ENCODE measurements at regions of chr3 and their contacts with region 1.

Region 1: DNA sequence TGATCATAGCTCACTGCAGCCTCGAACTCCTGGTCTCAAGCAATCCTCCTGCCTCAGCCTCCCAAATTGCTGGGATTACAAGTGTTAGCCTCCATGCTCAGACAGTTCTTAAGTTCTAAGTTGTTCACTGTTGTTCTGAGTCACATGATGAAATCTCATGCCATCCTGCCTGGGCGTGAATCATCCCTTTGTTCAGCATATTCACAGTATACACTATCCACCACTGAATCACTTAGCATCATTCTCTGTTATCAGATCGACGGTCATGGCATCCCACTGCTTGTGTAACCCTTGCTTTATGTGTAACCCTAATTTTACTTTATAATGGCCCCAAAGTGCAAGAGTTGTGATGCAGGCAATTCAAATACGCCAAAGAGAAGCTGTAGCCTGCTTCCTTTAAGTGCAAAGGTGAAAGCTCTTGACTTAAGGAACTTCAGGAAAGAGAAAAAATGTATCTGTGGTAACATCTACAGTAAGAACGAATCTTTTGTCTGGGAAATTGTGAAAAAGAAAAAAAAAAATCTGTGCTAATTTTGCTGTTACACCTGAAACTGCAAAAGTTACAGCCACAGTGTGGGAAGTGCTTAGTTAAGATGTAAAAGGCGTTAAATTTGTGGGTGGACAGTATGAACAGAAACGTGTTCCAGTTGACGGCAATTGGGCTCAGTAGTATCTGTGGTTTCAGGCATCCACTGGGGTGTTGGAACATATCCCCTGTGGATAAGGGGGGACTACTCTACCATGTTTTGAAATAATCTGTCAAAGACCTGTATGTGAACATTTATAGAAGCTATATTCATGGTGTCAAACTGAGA is 80.6 kb downstream of the PCOLCE2 start:
- DNase-seq: peak; percentile 72
- ATAC-seq: peak; percentile 62
- H3K4me3 ChIP-seq: no peak overlapping the region
- H3K27ac ChIP-seq: no peak overlapping the region
- H3K4me1 ChIP-seq: no peaks in the 10 kb centered on the region
- H3K27me3 ChIP-seq: no peaks in the 10 kb centered on the region
- CTCF ChIP-seq: no peak
- POLR2A ChIP-seq: no peak
- RAD21 ChIP-seq: no peak

Region 2: GRCh38 chr3:142595951-142596725 is 212.2 kb before region 1 on chr3 and contains the start of gene PLS1:
- CTCF ChIA-PET with region 1: no interaction called
- POLR2A ChIA-PET with region 1: no interaction called
- dilution Hi-C with region 1: no loop called
- in situ Hi-C with region 1: no loop called
- intact Hi-C with region 1: loop called (anchors 10 kb)
- DNase-seq: peak; percentile 70
- ATAC-seq: peak; percentile 96
- H3K4me3 ChIP-seq: peak within 1 kb of the TSS; percentile 81
- H3K27ac ChIP-seq: peak within 1 kb of the TSS; percentile 9; the same call in 1 of the 2 replicates
- H3K4me1 ChIP-seq: no peaks in the 10 kb centered on the region
- H3K27me3 ChIP-seq: no peaks in the 10 kb centered on the region
- CTCF ChIP-seq: no peak
- POLR2A ChIP-seq: peak; percentile 42; the same call in 1 of the 2 replicates
- RAD21 ChIP-seq: no peak; the same call in 1 of the 2 replicates
- total RNA-seq, gene PLS1: 0.90 and 1.7 TPM in 2 replicates

Region 3: DNA sequence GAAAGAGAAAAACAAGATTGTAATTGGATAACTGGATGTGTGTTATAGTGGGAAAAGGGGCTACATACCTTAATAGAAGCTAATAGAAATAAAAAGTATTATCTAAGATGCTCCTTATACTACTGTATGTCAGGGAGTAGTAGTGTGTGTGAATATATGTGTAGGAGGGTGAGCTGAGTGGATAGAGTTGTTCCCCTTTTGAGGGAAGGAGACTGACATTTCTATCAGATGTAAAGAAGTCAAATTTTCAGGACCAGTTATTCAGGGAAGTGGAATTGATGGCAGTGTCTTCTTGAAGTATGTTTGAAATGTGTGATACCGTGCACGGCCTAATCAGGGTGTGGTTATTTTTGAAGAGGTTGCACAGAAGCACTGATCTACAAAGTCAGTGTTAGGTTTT is 31.5 kb after region 1 on chr3:
- CTCF ChIA-PET with region 1: no interaction called
- POLR2A ChIA-PET with region 1: no interaction called
- dilution Hi-C with region 1: no loop called
- in situ Hi-C with region 1: no loop called
- intact Hi-C with region 1: no loop called
- DNase-seq: no peak
- ATAC-seq: no peak
- H3K4me3 ChIP-seq: no peak overlapping the region
- H3K27ac ChIP-seq: no peak overlapping the region
- H3K4me1 ChIP-seq: no peaks in the 10 kb centered on the region
- H3K27me3 ChIP-seq: peaks cover 9% of the 10 kb centered on the region
- CTCF ChIP-seq: no peak
- POLR2A ChIP-seq: no peak
- RAD21 ChIP-seq: no peak

Region 4: GRCh38 chr3:143389388-143389787 is 581.1 kb after region 1 on chr3:
- CTCF ChIA-PET with region 1: no interaction called
- POLR2A ChIA-PET with region 1: no interaction called
- dilution Hi-C with region 1: no loop called
- in situ Hi-C with region 1: no loop called
- intact Hi-C with region 1: no loop called
- DNase-seq: no peak
- ATAC-seq: no peak
- H3K4me3 ChIP-seq: no peak overlapping the region
- H3K27ac ChIP-seq: no peak overlapping the region
- H3K4me1 ChIP-seq: no peaks in the 10 kb centered on the region
- H3K27me3 ChIP-seq: no peaks in the 10 kb centered on the region
- CTCF ChIP-seq: no peak
- POLR2A ChIP-seq: no peak
- RAD21 ChIP-seq: no peak

Measured in IMR-90 (cell line).